Left cardiac atrium (tissue), 4 donors: ENCODE measurements at regions of chr13 and their contacts with region 1.

Region 1: DNA sequence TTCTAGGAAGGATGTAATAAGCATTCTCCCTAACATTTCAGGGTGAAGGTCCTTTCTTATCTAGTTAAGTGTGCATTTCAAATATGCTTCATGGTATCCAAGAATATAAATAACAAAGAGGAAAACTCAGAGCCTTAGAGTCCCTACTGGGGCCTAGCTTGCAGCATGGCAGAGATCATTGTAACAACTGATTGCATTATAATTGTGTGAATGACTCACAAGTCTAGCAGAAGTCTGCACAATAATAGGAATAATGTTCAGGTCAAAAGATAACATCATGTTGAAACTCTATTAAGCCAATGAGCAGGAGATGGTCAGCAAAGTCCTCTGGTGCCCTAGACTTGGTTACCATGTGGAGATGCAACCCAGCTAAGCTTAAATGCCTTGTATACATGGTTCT is 3.4 kb downstream of the POSTN start:
- DNase-seq: no peak
- ATAC-seq: no peak

Region 2: DNA sequence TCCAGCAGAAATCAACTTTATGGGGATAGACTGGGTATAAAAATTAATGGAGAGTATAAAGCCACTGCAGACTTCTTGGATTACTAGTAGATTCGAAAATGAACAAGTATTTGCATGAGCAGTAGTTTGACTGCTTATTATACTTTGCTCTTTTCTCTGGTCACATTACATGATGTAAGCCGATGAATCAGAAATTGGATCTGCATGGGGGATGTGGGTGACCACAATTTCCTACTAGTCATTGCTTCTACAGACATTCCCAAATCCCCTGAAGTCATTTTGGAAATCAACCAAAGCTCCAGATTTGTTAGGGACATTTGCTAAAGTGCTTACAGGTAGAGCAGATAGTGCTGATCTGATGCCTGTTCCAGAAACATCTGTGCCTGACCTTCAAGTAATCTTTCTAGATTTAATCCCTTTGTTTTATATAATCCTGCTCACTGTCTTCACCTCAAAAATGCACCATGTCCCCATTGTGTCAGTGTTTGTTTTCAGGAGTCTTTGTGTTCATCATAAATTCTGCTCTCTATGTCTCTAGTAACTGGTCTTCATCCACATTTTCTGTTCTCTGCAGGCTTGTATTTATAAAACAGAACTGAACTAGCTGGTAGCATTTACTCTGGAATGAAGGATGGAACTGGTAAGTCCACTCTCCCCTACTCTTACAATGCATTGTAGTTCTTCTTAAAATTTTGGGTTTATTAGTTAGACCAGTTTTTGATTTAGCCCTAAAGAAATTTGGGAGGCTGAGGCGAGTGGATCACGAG is 288.2 kb before region 1 on chr13:
- intact Hi-C with region 1: loop called in 1 of 2 experiments (anchors 10 kb)
- DNase-seq: no peak
- ATAC-seq: peak in 1 of 2 donors; percentile 79